ENCODE measurements at regions of chr12 and their contacts with region 1.

Region 1: GRCh38 chr12:54439521-54440255 is 20.6 kb upstream of the ITGA5 start:
- DNase-seq: peak; percentile 59
- H3K4me3 ChIP-seq: no peak overlapping the region
- H3K27ac ChIP-seq: no peak overlapping the region
- H3K4me1 ChIP-seq: peaks cover 17% of the 10 kb centered on the region
- H3K27me3 ChIP-seq: no peaks in the 10 kb centered on the region
- CTCF ChIP-seq: peak; percentile 78 to 83

Region 2: DNA sequence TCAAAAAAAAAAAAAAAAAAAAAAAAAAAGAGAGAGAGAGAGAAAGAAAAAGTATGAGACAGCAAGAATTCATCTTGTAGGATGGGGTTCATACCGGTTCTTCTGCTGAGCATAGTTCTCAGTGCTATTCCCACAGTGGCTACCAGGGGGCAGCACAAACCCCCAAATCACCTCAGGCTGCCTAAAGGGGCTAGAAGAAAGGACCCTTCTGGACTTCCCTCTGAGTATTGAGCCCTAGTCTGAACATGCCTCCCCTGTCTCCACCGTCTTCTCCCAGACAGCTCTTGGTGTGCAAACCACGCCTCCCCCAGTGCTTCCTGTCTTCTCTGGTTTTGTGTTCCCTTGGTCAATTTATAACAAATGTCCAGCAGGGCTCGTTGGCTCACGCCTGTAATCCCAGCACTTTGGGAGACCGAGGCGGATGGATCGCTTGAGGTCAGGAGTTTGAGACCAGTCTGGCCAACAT is 219.6 kb before region 1 on chr12:
- CTCF ChIA-PET with region 1: no interaction called
- dilution Hi-C with region 1: no loop called
- in situ Hi-C with region 1: no loop called
- intact Hi-C with region 1: loop called (anchors 2 kb)
- DNase-seq: peak; percentile 79
- H3K4me3 ChIP-seq: no peak overlapping the region
- H3K27ac ChIP-seq: no peak overlapping the region
- H3K4me1 ChIP-seq: peaks cover 44% of the 10 kb centered on the region
- H3K27me3 ChIP-seq: no peaks in the 10 kb centered on the region
- CTCF ChIP-seq: peak; percentile 79 to 86

Region 3: DNA sequence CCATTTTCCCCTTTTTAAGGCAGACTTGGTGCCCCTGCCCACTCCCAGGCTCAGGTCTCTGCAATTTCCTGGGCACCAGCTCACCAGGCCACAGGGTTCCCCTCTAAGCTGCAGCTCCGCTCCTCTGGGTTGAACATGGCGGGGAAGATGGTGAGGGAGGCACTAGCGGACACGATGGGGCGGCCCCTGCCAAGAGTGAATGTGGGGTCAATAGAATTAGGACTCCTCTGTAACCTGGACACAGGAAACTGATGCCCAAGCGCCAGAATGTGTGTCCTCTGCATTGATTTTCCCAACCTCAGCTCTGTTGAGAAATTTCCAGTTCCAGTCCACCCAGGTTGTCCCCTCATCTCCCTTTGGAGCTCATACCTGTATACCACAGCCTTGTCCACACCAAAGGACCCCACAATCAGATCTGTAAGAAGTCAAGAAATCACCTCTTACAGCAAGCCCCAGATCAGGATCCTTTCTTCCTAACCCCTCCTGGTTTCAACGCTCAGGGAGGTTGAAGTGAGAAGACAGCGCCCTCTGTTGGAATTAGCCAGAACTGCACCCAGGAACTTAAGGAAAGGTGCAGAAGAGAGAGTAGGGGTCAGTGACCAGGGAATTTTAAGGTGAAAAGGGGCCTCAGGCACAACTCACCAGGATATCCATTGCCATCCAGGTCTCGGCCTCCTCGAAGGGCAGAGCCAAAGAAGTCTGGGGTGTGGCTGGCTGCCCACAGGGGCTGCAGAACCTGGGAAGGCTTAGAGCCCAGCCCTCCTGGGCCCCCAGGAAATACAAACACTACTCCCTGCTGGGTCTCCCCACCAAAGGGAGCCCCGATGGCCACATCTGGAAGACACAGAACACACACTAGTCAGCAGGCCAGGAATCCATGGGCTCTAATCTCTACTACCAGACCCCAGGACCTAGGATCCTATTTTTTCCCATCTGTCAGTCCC is 35.4 kb before region 1 on chr12:
- CTCF ChIA-PET with region 1: interaction called, 27 read pairs
- dilution Hi-C with region 1: no loop called
- in situ Hi-C with region 1: loop called (anchors 5 kb)
- intact Hi-C with region 1: loop called (anchors 1 kb)
- DNase-seq: no peak
- H3K4me3 ChIP-seq: no peak overlapping the region
- H3K27ac ChIP-seq: no peak overlapping the region
- H3K4me1 ChIP-seq: no peaks in the 10 kb centered on the region
- H3K27me3 ChIP-seq: no peaks in the 10 kb centered on the region
- CTCF ChIP-seq: peak; percentile 91 to 97

Region 4: DNA sequence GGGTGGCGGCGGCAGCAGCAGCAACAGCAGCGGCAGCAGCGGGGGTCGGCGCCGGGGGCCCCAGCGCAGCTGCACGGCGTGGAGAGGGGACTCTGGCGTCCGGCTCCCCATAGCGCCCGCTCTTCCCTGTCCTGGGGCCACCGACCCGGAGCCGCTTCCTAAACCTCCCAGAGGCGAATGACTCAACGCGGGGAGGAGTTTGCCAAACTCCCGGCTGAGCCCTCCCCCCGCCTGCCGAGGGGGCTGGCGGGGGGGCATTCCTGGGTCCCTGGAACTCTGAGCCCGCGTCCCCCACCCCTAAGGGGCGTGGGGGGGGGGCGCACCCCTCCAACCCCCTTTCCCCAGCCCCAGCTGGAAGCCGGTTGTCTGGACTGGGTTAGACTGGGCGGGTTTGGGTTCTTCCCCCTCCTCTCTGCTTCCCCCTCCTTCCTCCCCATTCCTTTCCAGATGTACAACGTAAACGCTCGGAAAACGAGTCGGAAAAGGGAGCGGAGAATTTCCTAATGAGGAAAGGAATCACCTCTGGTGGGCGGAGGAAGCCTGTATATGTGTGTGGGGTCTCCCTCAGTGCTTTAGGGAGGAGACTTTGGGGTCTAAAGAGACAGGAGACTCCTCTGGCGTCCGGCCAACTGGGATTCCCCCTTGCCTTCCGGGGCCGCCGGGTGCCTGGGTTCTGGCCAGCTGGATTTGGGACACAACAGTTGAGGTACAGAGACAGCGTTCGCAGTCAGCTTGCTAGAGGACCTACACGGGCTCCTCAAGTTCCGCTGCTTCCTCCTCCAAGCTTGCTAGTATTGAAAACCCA is 20.4 kb before region 1 on chr12 and contains the start of gene ITGA5:
- CTCF ChIA-PET with region 1: no interaction called
- dilution Hi-C with region 1: no loop called
- in situ Hi-C with region 1: no loop called
- intact Hi-C with region 1: loop called (anchors 1 kb)
- DNase-seq: peak; percentile 76
- H3K4me3 ChIP-seq: peak within 1 kb of the TSS; percentile 74 to 87 (median 82)
- H3K27ac ChIP-seq: peak within 1 kb of the TSS; percentile 66
- H3K4me1 ChIP-seq: peaks cover 56% of the 10 kb centered on the region
- H3K27me3 ChIP-seq: no peaks in the 10 kb centered on the region
- CTCF ChIP-seq: no peak
- total RNA-seq, gene ITGA5: 74.2 to 128 TPM

Measured in mammary epithelial cell (primary cell).